AG04450 (cell line): ENCODE measurements at regions of chr13 and their contacts with region 1.

Region 1: DNA sequence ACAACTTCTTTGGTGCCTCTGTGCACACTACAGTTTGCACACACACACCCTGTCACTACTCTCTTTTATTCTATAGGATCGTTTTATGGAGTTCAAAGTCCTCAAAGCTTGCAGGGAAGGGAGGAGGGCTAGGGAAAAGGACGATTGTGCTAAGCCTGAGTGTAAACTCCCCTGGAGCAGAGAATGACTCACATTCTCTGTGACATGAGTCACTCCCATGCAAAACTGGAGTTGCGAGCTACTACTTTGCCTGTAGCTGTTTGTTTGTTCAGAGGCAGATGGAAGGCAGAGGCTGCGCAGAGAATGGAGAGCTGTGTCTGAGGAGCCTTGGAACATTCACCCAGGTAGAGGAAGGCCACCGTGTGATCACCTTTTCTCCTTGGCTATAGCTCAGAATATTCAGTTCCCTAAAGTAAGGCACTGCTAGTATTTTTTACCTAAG is 80.5 kb upstream of the MBNL2 start:
- DNase-seq: peak; percentile 71
- H3K4me3 ChIP-seq: peak overlapping the region; percentile 18; the same call in 1 of the 2 replicates
- H3K27ac ChIP-seq: no peak overlapping the region
- H3K27me3 ChIP-seq: no peaks in the 10 kb centered on the region
- CTCF ChIP-seq: no peak

Region 2: DNA sequence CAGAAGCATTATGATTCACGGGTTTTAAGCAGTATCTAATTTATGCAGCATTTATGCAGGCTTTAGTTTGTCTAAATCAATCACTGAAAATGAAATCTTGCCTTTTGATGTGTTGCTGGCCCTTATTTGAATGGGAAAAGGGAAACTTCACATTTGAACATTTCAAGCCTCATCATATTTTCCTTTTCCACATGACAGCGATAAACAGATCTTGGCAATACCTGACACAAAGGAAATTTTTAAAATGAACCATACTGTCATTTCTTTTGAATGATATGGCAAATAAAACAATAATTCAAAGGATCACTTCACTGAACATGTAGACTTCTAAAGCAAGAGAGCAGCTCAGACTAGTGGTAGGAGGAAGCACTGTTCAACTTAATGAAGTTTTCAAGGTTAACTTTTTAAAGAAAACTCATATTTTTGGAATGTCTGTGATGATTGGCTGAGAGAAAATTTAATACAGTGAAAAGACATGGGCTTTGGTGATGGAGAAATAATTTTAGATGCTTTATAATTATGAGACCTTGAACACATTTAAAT is 345.4 kb before region 1 on chr13:
- CTCF ChIA-PET with region 1: no interaction called
- POLR2A ChIA-PET with region 1: no interaction called
- DNase-seq: no peak
- H3K4me3 ChIP-seq: no peak overlapping the region
- H3K27ac ChIP-seq: no peak overlapping the region
- H3K27me3 ChIP-seq: no peaks in the 10 kb centered on the region
- CTCF ChIP-seq: no peak

Region 3: DNA sequence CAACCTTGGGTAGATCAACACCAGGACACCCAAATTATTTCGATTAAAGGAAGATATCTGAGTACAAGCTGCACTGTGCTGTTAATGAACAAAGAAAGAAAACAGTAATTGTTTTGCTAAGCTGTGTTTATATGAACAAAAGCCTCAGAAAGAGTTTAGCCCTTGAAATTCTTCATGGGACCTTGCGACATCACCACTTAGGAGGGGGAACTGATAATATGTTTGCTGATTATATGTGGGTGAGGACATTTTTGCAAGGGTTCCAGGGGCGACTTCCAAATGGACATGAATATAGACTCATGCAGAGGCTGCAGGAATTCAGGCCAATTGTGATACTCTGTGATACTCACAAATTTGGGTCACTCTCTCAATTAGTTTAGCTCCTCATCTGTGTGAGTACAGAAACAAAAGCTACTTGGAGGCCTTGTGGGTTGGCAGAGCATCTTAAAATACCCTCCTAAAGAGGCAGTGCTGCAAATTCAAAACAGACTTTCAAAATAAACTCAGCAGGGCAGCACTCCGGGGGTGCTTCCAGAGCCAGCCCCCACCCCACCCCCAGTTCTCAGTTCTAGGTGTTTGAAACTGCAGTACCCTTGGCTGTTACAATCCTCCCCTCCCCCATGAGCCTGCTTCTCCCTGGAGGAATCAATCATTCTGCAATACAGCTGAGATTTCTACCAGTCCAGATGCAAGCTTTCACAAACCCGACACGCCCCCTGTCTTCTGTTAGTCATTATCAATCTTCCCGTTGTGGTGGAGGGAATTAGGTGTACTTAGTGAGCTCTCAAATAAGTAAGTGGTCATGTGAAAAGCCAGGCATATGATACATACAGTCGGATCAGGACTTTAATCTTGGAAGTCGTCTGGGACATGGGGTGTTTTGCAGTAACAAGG is 16.4 kb before region 1 on chr13:
- CTCF ChIA-PET with region 1: interaction called, 9 read pairs
- POLR2A ChIA-PET with region 1: interaction called, 15 read pairs
- DNase-seq: no peak
- H3K4me3 ChIP-seq: no peak overlapping the region; the same call in 1 of the 2 replicates
- H3K27ac ChIP-seq: peak overlapping the region; percentile 41
- H3K27me3 ChIP-seq: no peaks in the 10 kb centered on the region
- CTCF ChIP-seq: no peak

Region 4: DNA sequence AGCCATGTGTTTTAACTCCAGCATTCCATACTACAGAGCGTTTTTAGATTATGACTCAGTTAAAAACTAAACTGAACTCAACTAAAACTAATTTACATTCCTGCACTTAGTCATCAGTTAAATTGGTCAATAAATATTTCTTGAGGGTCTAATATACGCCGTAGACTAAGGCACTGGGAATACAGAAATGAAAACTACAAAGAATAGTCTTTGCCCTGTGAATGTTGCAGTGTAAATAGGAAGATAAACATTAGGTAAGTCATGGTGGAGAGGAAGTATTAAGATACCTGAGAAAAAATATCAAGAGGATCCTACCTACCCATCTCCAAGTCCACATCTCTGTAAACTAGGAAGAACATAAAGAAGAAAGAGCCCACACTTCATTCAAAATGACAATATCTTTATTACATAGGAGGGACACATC is 133.3 kb after region 1 on chr13:
- CTCF ChIA-PET with region 1: no interaction called
- POLR2A ChIA-PET with region 1: no interaction called
- DNase-seq: no peak
- H3K4me3 ChIP-seq: no peak overlapping the region
- H3K27ac ChIP-seq: no peak overlapping the region
- H3K27me3 ChIP-seq: no peaks in the 10 kb centered on the region
- CTCF ChIP-seq: no peak